Panc1 (cell line): ENCODE measurements at regions of chr5 and their contacts with region 1.

Region 1: DNA sequence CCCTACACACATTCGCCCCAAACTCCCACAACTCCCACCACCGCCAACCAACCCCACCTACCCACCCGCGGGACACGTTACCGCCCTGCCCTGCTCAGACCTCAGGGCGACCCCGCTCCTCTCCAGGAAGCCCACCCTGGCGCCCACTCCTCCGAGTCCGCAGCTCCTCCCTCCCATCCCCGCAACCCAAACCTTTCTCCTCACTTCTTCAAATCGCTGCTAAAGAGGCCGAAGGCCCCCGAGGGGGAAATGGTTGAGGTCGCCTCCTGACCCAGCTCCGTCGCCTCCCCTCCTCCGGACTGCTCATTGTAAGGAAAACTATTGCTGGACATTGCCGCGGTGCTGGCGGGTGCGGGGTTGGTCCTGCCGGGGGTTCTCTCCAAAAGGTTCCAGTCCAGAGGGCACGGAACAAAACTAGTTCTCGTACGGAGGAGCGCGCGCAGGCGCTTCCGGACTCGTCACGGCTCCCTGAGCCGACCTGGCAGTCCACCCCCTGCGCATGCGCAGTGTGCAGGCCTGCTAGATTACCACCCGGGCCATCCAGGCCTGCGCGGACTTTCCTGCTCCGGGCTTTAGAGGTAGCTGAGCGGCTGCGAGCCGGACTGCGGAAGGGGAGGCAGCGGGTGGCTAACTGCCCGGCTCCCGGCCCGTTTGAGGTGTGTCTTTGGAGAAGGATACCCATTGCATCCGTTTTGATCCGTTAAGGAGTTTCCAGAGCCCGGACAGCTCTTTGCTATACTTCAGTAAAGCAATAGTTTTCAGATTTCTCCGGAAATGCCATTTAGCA is at the start of gene AP3B1:
- DNase-seq: peak; percentile 93
- ATAC-seq: peak; percentile 97
- H3K4me3 ChIP-seq: peak within 1 kb of the TSS; percentile 83 to 98
- H3K27ac ChIP-seq: peak within 1 kb of the TSS; percentile 96
- H3K4me1 ChIP-seq: peaks cover 14% of the 10 kb centered on the region
- H3K27me3 ChIP-seq: no peaks in the 10 kb centered on the region
- CTCF ChIP-seq: no peak
- total RNA-seq, gene AP3B1: 55.4 TPM

Region 2: GRCh38 chr5:78359831-78360673 is 65.6 kb after region 1 on chr5 and contains the start of gene SCAMP1:
- CTCF ChIA-PET with region 1: no interaction called
- POLR2A ChIA-PET with region 1: interaction called, 3 read pairs
- in situ Hi-C with region 1: no loop called
- intact Hi-C with region 1: loop called (anchors 2 kb)
- DNase-seq: peak; percentile 79
- ATAC-seq: peak; percentile 97
- H3K4me3 ChIP-seq: peak within 1 kb of the TSS; percentile 97
- H3K27ac ChIP-seq: peak within 1 kb of the TSS; percentile 95
- H3K4me1 ChIP-seq: peaks cover 24% of the 10 kb centered on the region
- H3K27me3 ChIP-seq: no peaks in the 10 kb centered on the region
- CTCF ChIP-seq: peak; percentile 34
- total RNA-seq, gene SCAMP1: 51.3 TPM

Region 3: DNA sequence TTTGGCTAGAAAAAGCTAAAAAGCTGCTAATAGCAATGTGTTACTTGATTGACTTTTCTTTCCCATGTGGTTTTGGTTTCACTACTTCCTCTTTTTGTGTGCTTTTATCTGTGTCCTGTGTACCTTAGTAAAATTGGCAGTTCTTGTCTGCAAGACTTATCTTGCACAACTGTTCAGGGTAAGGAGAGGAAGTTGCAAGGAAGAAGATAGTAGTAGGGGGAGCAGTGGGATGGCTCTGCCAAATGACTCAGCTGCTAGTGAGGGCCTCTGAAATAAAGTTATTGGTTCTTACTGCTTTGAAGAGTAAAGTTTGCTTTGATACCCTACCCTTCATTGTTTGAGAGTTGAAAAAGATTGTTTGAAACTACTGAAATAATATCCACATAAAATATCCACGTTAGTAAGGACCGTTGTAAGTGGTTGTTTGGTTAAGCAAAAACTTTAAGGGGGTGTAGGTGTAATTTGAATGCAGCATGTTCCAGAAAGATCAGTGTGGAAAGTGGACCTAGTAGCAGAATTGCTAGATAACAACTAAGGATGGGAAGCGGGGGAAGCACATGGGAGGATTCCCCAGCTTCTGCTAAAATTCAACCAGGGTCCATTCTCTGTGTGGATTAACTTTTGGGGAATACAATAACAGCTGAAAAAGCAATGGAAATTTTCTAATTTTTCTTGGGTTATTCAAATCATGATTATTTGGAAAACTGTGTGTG is 189.5 kb after region 1 on chr5:
- CTCF ChIA-PET with region 1: no interaction called
- POLR2A ChIA-PET with region 1: no interaction called
- in situ Hi-C with region 1: no loop called
- intact Hi-C with region 1: no loop called
- DNase-seq: no peak
- ATAC-seq: no peak
- H3K4me3 ChIP-seq: no peak overlapping the region
- H3K27ac ChIP-seq: no peak overlapping the region
- H3K4me1 ChIP-seq: no peaks in the 10 kb centered on the region
- H3K27me3 ChIP-seq: no peaks in the 10 kb centered on the region
- CTCF ChIP-seq: no peak

Region 4: DNA sequence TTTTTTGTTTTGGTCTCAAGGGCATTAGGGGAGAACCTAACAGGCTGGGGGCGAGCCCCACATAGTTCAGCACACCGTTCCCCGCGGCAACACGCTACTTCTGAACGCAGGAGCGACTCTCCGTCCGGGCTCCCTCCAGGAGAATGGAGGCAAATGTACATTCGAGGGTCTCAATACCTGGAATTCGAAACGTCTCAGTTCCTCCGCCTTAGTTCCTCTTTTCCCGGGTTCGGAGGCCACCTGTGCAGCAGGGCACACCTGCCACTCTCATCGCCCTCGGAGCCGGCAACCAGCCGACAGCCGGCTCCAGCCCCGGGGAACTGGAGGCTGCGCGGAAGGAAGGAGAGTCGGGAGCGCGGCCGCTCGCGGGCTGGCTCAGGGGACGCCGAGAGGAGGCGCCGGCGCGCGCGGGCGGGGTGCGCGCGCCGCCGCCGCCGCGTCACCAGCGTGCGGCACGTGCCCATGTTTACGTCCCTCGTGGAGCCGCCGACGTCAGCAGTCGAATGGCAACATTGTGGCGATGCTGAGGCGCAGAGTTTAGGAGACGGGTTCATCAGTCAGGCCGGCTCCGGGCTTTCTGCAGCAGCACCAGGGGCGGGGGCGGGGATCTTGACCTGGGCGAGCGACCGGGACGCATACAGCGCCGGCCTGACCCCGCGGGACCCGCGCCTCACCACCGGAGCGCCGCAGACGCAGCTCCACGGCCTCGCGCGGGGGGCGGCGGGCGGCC is 941.4 kb after region 1 on chr5 and contains the start of gene JMY:
- CTCF ChIA-PET with region 1: no interaction called
- POLR2A ChIA-PET with region 1: no interaction called
- in situ Hi-C with region 1: no loop called
- intact Hi-C with region 1: no loop called
- DNase-seq: no peak
- ATAC-seq: peak; percentile 89
- H3K4me3 ChIP-seq: peak within 1 kb of the TSS; percentile 76 to 84
- H3K27ac ChIP-seq: peak within 1 kb of the TSS; percentile 90
- H3K4me1 ChIP-seq: peaks cover 4% of the 10 kb centered on the region
- H3K27me3 ChIP-seq: no peaks in the 10 kb centered on the region
- CTCF ChIP-seq: no peak; the same call in 1 of the 2 replicates
- total RNA-seq, gene JMY: 6.1 TPM